ENCODE measurements at regions of chr4 and their contacts with region 1.

Region 1: DNA sequence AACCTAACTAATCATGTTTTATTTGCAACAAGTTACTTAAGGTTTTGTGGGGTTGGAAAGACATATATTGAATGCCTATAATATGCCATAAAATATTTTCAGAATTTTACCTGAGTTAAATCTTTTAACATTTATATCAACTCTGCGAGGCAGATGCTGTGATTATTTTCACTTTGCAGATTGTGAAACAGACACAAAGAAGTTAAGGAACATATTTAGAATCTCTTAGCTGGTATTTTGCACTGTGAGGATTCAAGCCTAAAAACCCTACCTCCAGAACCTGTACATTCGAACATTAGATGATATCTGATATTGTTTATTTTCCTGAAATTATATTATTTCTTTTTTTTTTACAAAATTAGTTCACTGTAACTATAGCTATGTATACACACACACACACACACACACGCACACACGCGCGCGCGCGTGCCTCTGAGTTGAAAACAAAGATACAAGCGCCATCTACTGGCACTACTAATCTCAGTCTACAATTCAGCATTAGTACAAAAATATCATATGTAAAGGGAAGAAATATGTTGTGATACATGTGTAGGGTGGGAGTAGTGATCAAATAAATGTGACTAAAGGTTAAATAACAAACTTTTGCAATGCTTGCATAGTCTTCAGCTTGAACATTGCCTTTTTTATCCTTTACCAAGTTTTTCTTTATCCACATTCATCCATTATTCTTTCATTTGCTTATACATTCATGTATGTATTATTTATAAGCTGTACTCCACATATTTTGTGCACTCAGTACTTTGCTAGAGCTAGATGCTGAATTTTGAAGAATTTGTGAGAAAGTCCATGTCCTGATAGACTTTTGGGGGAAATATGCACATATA is 61.5 kb downstream of the ANXA10 start:
- DNase-seq: peak; percentile 74
- H3K4me3 Mint-ChIP-seq: peak overlapping the region; percentile 35
- H3K27ac Mint-ChIP-seq: peak overlapping the region; percentile 37
- H3K4me1 Mint-ChIP-seq: peaks cover 20% of the 10 kb centered on the region
- H3K27me3 Mint-ChIP-seq: no peaks in the 10 kb centered on the region
- CTCF ChIP-seq: peak; percentile 54

Region 2: GRCh38 chr4:167475951-167476350 is 677.9 kb before region 1 on chr4:
- CTCF ChIA-PET with region 1: no interaction called
- intact Hi-C with region 1: no loop called
- DNase-seq: no peak
- H3K4me3 Mint-ChIP-seq: no peak overlapping the region
- H3K27ac Mint-ChIP-seq: no peak overlapping the region
- H3K4me1 Mint-ChIP-seq: no peaks in the 10 kb centered on the region
- H3K27me3 Mint-ChIP-seq: no peaks in the 10 kb centered on the region
- CTCF ChIP-seq: no peak

Region 3: DNA sequence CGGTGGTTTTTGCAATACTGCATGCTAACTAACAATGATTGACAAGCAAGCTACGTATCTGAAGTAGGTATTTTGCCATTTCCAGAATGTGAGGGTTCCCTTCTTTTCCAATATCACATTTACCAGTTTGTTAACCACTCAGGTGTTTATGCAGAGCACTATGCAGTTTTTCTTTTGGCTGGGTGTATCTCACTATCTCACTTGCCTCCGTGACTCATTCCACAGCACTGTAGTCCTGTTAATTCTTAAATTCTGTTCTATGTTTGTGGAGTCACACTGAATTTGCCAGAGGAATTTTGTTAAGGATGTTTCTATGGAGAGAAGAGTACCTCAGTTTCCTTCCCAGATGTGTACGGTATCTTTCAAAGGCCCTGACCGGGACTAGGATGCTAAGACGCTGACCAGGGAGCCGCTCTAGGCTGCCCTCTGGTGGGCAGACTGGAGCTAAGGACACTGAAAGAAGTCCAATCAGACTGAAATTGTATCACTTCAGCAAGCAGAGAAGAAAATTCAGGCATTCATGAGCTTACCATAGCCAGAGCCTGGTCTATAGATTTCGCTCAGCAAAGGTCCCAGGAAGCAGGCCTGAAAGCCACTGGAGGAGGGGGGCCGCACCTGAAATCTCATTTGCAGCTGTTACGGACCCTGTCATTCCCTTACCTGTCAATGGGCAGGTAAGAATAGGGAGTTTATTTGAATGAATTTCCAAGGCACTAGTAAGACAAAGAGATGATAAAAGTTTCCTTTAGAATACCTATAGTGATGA is 531.2 kb before region 1 on chr4:
- CTCF ChIA-PET with region 1: no interaction called
- intact Hi-C with region 1: loop called (anchors 10 kb)
- DNase-seq: peak; percentile 67
- H3K4me3 Mint-ChIP-seq: no peak overlapping the region
- H3K27ac Mint-ChIP-seq: no peak overlapping the region
- H3K4me1 Mint-ChIP-seq: peaks cover 7% of the 10 kb centered on the region
- H3K27me3 Mint-ChIP-seq: no peaks in the 10 kb centered on the region
- CTCF ChIP-seq: peak; percentile 72

Region 4: DNA sequence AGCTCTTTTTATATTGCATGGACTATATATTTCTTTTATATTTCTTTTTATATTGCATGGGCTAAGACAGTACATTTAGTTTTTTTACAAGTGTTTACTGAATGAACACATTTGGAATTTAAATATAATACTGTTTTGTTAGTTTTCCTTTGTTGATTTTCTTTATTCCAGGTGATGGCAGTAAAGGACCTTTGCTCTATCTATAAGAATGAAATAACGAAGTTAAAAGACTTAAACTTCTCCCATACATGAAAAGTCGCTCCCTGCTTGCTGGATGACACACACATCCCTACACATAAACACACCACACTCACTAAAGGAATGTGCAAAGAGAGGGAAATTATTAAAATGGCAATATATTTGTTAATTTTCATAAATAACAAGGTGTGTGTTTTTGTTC is 164.0 kb before region 1 on chr4:
- CTCF ChIA-PET with region 1: interaction called, 3 read pairs
- intact Hi-C with region 1: loop called (anchors 1 kb)
- DNase-seq: no peak
- H3K4me3 Mint-ChIP-seq: no peak overlapping the region
- H3K27ac Mint-ChIP-seq: no peak overlapping the region
- H3K4me1 Mint-ChIP-seq: no peaks in the 10 kb centered on the region
- H3K27me3 Mint-ChIP-seq: no peaks in the 10 kb centered on the region
- CTCF ChIP-seq: no peak

Region 5: DNA sequence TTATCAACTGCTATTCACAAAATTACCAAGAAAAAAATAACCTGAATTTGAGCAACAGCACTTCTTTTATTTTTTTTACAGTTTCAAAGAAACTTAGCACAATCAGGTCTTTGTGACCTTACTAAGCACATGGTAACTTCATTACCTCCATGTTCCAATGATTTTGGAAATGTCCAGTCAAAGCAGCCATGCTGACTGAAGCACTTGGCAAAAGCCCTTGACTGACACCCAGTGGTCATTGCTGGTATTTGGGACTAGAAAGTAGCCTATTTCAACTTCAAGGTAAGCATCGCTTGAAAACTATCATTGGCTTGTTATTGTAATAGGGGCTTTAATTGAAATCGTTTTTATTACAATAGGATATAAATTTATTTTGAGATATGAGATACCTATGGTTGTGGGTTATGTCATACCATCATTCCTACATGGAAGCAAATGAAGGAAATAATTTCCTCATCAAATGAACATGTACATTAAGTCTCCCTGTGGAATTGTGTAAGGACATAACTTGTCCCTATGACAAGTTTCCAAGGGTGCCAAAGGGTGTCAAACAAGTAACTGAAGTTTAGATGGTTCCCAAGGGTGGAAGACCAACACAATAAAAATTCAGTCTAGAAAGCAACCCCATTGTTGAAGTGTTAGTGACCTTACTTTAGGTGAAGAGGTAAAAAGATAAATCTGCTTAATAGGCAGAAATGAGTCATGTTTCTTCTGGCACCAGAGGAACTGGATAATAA is 76.7 kb before region 1 on chr4:
- CTCF ChIA-PET with region 1: no interaction called
- intact Hi-C with region 1: loop called (anchors 1 kb)
- DNase-seq: peak; percentile 74
- H3K4me3 Mint-ChIP-seq: no peak overlapping the region
- H3K27ac Mint-ChIP-seq: no peak overlapping the region
- H3K4me1 Mint-ChIP-seq: peaks cover 8% of the 10 kb centered on the region
- H3K27me3 Mint-ChIP-seq: no peaks in the 10 kb centered on the region
- CTCF ChIP-seq: peak; percentile 43

Region 6: GRCh38 chr4:168092176-168092712 is 61.6 kb before region 1 on chr4 and contains the start of gene ANXA10:
- CTCF ChIA-PET with region 1: interaction called, 3 read pairs
- intact Hi-C with region 1: loop called (anchors 2 kb)
- DNase-seq: no peak
- H3K4me3 Mint-ChIP-seq: no peak within 1 kb of the TSS
- H3K27ac Mint-ChIP-seq: peak within 1 kb of the TSS; percentile 77
- H3K4me1 Mint-ChIP-seq: peaks cover 8% of the 10 kb centered on the region
- H3K27me3 Mint-ChIP-seq: no peaks in the 10 kb centered on the region
- CTCF ChIP-seq: no peak
- total RNA-seq, gene ANXA10: 43.2 and 58.3 TPM in 2 replicates